MCF 10A (cell line): ENCODE measurements at regions of chr5 and their contacts with region 1.

Region 1: DNA sequence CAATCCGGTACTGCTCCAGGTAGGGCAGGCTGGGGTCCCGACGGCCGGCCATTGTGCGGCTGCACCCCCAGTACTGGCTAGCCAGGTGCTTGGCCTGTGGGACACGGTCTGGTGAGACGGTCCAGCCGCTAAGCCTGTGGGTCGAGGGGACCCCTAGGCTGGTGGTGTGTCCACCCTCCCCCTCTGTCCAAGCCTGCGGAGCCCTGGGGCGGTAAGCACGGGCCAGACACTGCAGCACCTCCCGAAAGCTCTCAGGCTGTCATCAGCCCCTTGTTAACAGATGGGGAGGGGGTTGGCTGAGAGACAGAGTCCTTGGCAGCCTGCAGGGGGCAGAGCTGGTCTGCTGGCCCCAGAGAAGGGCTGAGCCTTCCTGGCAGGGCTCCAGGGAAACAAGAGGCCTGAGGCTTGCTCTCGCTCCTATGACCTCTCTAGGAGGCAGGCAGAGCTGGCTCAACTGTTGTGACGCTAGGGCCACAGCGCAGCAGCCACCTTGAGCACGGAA is 11.8 kb upstream of the MRNIP start:
- DNase-seq: peak; percentile 65
- H3K4me3 Mint-ChIP-seq: no peak overlapping the region
- H3K27ac Mint-ChIP-seq: no peak overlapping the region
- H3K4me1 Mint-ChIP-seq: peaks cover under 1% of the 10 kb centered on the region
- H3K27me3 Mint-ChIP-seq: no peaks in the 10 kb centered on the region
- CTCF ChIP-seq: peak; percentile 39

Region 2: GRCh38 chr5:179882338-179882737 is 11.9 kb after region 1 on chr5:
- CTCF ChIA-PET with region 1: interaction called, 11 read pairs
- POLR2A ChIA-PET with region 1: interaction called, 5 read pairs
- intact Hi-C with region 1: no loop called
- DNase-seq: no peak
- H3K4me3 Mint-ChIP-seq: no peak overlapping the region
- H3K27ac Mint-ChIP-seq: no peak overlapping the region
- H3K4me1 Mint-ChIP-seq: no peaks in the 10 kb centered on the region
- H3K27me3 Mint-ChIP-seq: no peaks in the 10 kb centered on the region
- CTCF ChIP-seq: no peak